Colonic mucosa (tissue), 4 donors: ENCODE measurements at regions of chr14 and their contacts with region 1.

Region 1: GRCh38 chr14:64294672-64295413 is 672 bp upstream of the ESR2 start:
- DNase-seq: peak; percentile 84
- H3K4me3 ChIP-seq: peak overlapping the region; percentile 38
- H3K27ac ChIP-seq: no peak overlapping the region
- H3K4me1 ChIP-seq: no peaks in the 10 kb centered on the region
- H3K27me3 ChIP-seq: peaks cover 5% of the 10 kb centered on the region
- CTCF ChIP-seq: peak; percentile 88

Region 2: GRCh38 chr14:63795532-63795931 is 499.3 kb before region 1 on chr14:
- intact Hi-C with region 1: loop called (anchors 10 kb)
- DNase-seq: no peak
- H3K4me3 ChIP-seq: no peak overlapping the region
- H3K27ac ChIP-seq: no peak overlapping the region
- H3K4me1 ChIP-seq: no peaks in the 10 kb centered on the region
- H3K27me3 ChIP-seq: no peaks in the 10 kb centered on the region
- CTCF ChIP-seq: no peak